ENCODE measurements at regions of chr19 and their contacts with region 1.

Region 1: GRCh38 chr19:5271141-5271540 is 69.5 kb downstream of the PTPRS start:
- DNase-seq: no peak
- H3K4me3 ChIP-seq: no peak overlapping the region
- H3K27ac ChIP-seq: no peak overlapping the region
- H3K4me1 ChIP-seq: peaks cover 15% of the 10 kb centered on the region
- CTCF ChIP-seq: peak; percentile 43

Region 2: GRCh38 chr19:5186293-5187050 is 84.7 kb before region 1 on chr19:
- CTCF ChIA-PET with region 1: no interaction called
- POLR2A ChIA-PET with region 1: no interaction called
- intact Hi-C with region 1: no loop called
- DNase-seq: no peak
- H3K4me3 ChIP-seq: no peak overlapping the region
- H3K27ac ChIP-seq: no peak overlapping the region
- H3K4me1 ChIP-seq: no peaks in the 10 kb centered on the region
- CTCF ChIP-seq: no peak

Region 3: DNA sequence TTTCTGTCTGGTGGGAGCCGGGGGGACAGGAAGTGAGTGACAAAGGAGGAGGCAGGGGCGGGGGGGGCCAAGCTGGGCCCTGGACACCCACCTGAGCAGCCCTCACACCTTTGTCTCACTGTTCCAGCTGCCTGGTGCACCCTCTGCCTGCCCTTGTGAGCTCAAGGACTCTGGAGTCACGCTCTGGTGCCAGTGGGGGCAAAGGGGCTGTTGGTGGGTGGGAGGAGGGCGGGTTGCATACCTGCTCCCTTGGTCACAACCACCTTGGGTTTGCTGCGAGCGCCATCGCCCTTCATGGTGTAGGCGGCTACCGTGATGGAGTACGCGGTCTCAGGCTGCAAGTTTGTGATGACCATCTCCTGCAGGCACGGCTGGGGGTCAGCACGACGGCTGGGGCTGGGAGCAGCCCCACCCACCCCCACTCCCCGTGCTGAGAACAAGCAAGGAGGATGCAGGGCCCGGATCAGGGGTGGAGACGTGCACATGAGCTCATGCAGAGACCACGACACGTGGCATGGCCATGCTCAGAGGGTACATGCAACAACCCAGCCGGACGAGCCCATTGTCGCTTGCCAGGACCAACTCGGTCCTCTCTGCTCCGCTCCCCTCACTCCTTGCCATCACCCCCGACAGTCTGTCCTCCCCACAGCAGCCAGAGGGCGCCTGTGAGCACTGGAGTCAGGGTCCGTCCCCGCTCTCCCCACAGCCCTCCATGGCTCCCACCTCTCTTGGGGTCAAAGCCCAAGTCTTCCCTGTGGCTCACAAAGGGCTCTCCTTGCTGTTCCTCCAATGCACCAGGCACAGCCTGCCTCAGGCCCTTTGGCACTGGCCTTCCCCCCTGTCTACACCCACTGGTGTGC is 45.4 kb before region 1 on chr19:
- CTCF ChIA-PET with region 1: no interaction called
- POLR2A ChIA-PET with region 1: no interaction called
- intact Hi-C with region 1: loop called (anchors 2 kb)
- DNase-seq: peak; percentile 33
- H3K4me3 ChIP-seq: no peak overlapping the region
- H3K27ac ChIP-seq: no peak overlapping the region
- H3K4me1 ChIP-seq: no peaks in the 10 kb centered on the region
- CTCF ChIP-seq: peak; percentile 79

Region 4: DNA sequence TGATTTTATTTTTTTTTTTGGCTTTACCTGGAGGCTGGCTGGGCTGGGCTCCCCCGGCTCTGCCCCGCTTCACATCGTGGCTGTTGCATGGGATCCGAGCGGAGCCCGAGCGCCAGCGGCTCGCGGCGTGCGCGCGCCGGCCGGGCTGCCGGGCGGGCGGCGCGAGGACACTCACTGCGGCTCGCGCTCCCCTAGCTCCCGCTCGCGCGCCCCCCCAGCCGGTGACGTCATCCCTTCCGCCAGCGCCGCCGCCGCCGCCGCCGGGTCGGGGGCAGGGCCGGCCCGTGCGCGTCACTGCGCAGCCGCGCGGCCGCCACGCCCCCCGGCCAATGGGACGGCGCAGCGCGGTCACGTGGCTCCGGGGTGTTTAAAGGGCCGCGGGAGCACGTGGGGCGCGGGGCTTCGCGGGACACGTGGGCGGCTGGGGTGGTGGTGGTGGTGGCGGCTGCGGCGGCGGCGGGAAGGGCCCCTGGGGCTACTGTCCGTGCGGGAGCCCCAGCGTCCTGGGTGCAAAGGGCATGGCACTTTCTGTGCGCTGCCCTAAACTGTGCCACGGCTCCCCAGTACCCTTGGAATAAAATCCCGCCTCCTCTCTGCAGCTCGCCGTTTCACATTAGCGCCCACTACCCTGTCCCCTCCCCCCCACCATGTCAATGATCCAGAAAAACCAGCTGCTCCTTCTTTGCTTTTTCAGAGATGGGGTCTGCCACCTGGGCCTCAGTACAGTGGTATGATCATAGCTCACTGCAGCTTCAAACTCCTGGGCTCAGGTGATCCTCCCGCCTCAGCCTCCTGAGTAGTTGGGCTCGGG is 69.7 kb after region 1 on chr19 and contains the start of gene PTPRS:
- CTCF ChIA-PET with region 1: no interaction called
- POLR2A ChIA-PET with region 1: no interaction called
- intact Hi-C with region 1: loop called (anchors 5 kb)
- DNase-seq: peak; percentile 88
- H3K4me3 ChIP-seq: peak within 1 kb of the TSS; percentile 77
- H3K27ac ChIP-seq: peak within 1 kb of the TSS; percentile 37
- H3K4me1 ChIP-seq: peaks cover 41% of the 10 kb centered on the region
- CTCF ChIP-seq: no peak
- total RNA-seq, gene PTPRS: 39.0 and 48.5 TPM in 2 replicates